AG04450 (cell line): ENCODE measurements at regions of chr2 and their contacts with region 1.

Region 1: DNA sequence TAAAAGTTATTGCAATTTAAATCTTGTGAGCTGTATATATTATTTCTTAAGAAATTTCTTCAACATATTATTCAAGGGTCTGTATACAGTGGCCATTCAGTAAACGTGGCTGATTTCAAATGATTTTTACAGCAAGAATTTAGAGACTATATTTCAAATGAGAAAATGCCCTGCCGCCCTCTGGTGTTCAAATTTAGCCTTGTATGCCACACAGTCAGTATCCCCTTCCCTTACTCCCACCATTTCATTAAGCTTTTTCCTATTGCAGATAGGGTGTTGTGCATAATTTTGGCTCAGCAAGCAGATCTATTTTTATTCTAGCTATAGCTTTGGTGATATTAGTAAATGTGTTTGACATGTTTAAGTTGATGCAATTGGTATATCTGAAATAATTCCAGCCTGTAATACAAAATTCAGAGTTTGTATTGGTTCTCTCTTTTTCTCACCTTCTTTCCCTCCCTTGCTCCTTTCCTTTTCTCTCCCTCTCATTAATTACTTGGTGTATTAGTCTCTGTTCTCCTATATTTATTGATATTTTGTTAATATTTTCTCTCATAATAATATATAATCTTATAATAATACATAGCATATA is 22.8 kb upstream of the SCN7A start:
- DNase-seq: peak; percentile 18
- H3K4me3 ChIP-seq: no peak overlapping the region
- H3K27ac ChIP-seq: no peak overlapping the region
- H3K27me3 ChIP-seq: no peaks in the 10 kb centered on the region
- CTCF ChIP-seq: peak; percentile 84

Region 2: DNA sequence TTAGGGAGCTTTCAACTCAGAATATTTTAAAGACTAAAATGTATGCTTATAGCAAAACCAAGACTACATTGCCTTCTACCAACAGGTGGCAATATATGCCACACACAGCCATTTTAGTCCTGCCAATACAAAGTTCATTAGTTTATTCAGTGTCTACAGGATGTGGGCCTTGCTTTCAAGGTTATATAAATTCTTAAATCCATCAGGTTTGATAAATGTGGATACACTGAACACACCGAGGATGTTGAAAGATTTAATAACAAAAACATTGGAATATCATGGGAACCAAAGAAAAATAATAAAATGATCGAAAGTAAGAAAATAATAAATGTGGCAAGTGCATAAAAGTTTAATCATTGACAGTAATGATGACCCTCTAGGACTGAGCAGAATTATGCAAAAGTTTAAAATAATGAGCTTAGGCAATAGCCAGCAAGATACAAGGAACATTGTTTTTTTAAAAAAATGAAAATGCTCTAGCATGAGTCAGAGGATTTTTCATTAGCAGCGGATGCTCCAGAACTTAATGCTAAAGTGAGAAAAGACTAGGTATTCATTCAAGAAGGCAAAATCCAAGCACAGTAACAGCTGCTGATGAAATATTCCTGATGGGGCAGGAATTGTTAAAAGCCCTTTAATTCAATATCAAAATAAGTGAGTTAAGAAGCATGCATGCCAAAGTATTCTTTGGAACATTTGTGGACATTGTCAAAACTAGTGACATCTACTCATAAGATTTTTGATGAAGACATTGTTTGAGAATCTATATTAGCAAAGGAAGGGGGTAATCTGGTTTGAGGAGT is 155.3 kb before region 1 on chr2:
- CTCF ChIA-PET with region 1: interaction called, 20 read pairs
- POLR2A ChIA-PET with region 1: no interaction called
- DNase-seq: no peak
- H3K4me3 ChIP-seq: no peak overlapping the region
- H3K27ac ChIP-seq: no peak overlapping the region
- H3K27me3 ChIP-seq: no peaks in the 10 kb centered on the region
- CTCF ChIP-seq: peak; percentile 60

Region 3: GRCh38 chr2:166417669-166418068 is 99.1 kb before region 1 on chr2:
- CTCF ChIA-PET with region 1: interaction called, 14 read pairs
- POLR2A ChIA-PET with region 1: no interaction called
- DNase-seq: no peak
- H3K4me3 ChIP-seq: no peak overlapping the region
- H3K27ac ChIP-seq: no peak overlapping the region
- H3K27me3 ChIP-seq: no peaks in the 10 kb centered on the region
- CTCF ChIP-seq: no peak; the same call in 1 of the 2 replicates

Region 4: DNA sequence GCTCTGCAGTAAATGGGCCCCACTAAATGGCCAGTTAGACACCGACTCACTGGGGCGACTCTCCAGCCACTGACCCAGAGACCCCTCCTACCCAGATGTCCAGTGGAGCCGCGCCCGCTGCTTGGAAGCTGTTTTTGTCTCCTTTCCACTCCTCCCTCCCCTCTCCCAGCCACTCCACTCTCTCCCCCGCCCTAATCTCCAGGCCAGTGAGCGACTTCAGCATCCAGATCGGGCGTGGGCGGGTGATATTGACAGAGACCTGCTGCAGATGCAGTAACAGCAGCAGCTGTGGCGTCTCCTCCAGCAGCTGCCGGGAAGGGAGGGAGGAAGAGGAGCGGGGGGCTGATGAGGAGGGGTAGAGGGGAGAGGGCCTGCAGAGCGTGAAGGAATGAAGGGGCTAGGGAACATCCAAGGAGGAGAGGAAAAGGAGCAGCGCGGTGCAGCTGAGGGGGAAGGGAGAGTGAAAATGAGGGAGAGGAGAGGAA is 22.6 kb before region 1 on chr2 and contains the start of gene SCN7A:
- CTCF ChIA-PET with region 1: interaction called, 19 read pairs
- POLR2A ChIA-PET with region 1: interaction called, 3 read pairs
- DNase-seq: peak; percentile 67
- H3K4me3 ChIP-seq: peak within 1 kb of the TSS; percentile 68
- H3K27ac ChIP-seq: no peak within 1 kb of the TSS
- H3K27me3 ChIP-seq: no peaks in the 10 kb centered on the region
- CTCF ChIP-seq: no peak
- polyA plus RNA-seq, gene SCN7A: 7.0 and 9.8 TPM in 2 replicates

Region 5: GRCh38 chr2:166867874-166868514 is 351.2 kb after region 1 on chr2:
- CTCF ChIA-PET with region 1: no interaction called
- POLR2A ChIA-PET with region 1: no interaction called
- DNase-seq: no peak
- H3K4me3 ChIP-seq: no peak overlapping the region
- H3K27ac ChIP-seq: no peak overlapping the region
- H3K27me3 ChIP-seq: no peaks in the 10 kb centered on the region
- CTCF ChIP-seq: no peak